GM12878 (cell line): ENCODE measurements at regions of chr12 and their contacts with region 1.

Region 1: DNA sequence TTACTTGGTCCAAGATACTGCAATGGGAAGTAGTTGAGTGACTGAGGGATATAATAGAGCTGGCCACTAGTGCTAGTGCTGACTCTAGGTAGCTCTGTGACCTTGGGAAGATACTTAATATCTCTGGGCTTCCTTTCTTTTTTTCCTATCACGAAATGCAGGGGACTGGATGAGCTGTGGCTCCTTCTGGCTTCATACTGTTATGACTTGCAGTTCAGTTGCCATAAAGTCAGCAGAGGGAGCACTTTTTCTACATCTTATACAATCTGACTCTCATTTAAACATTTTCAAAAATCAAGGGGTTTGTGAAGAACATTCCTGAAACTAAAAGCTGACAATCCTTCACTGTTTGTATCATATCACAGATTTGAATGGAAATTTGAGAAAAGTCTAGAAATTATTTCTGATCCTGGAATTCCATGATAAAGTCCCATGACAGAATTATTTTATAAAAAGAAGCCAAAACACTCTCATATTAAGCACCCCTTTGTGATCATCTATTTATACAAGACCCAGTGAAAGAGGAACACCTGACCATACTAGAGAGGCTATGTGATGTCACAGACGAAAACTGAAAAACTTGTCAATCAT is 5.4 kb downstream of the BHLHE41 start:
- DNase-seq: no peak
- ATAC-seq: peak; percentile 57
- H3K4me3 ChIP-seq: no peak overlapping the region
- H3K27ac ChIP-seq: no peak overlapping the region
- H3K4me1 ChIP-seq: peaks cover 25% of the 10 kb centered on the region
- H3K27me3 ChIP-seq: peaks cover 8 to 28% of the 10 kb centered on the region in 2 experiments
- CTCF ChIP-seq: peak; percentile 40 to 57 (median 46); a peak in 5 of 6 replicates
- EP300 ChIP-seq: no peak
- POLR2A ChIP-seq: no peak
- RAD21 ChIP-seq: peak; percentile 65

Region 2: GRCh38 chr12:26153421-26154154 is 34.1 kb after region 1 on chr12:
- CTCF ChIA-PET with region 1: interaction called, 74 read pairs
- POLR2A ChIA-PET with region 1: interaction called, 11 read pairs
- RAD21 ChIA-PET with region 1: interaction called, 26 read pairs
- SMC1A ChIA-PET with region 1: interaction called, 91 read pairs
- in situ Hi-C with region 1: no loop called
- intact Hi-C with region 1: loop called (anchors 1 kb)
- DNase-seq: no peak
- ATAC-seq: no peak
- H3K4me3 ChIP-seq: no peak overlapping the region
- H3K27ac ChIP-seq: no peak overlapping the region
- H3K4me1 ChIP-seq: peaks cover 35% of the 10 kb centered on the region
- H3K27me3 ChIP-seq: no peaks in the 10 kb centered on the region
- CTCF ChIP-seq: no peak
- EP300 ChIP-seq: no peak
- POLR2A ChIP-seq: no peak
- RAD21 ChIP-seq: no peak

Region 3: GRCh38 chr12:26233631-26234030 is 114.1 kb after region 1 on chr12:
- CTCF ChIA-PET with region 1: no interaction called
- POLR2A ChIA-PET with region 1: no interaction called
- RAD21 ChIA-PET with region 1: no interaction called
- SMC1A ChIA-PET with region 1: no interaction called
- in situ Hi-C with region 1: no loop called
- intact Hi-C with region 1: no loop called
- DNase-seq: no peak
- ATAC-seq: no peak
- H3K4me3 ChIP-seq: no peak overlapping the region
- H3K27ac ChIP-seq: no peak overlapping the region
- H3K4me1 ChIP-seq: no peaks in the 10 kb centered on the region
- H3K27me3 ChIP-seq: peaks cover 0 to 2% of the 10 kb centered on the region in 2 experiments; a peak in 1 of 4 replicates
- CTCF ChIP-seq: no peak
- EP300 ChIP-seq: no peak
- POLR2A ChIP-seq: no peak
- RAD21 ChIP-seq: no peak

Region 4: GRCh38 chr12:26327975-26328644 is 208.6 kb after region 1 on chr12:
- CTCF ChIA-PET with region 1: interaction called, 6 read pairs
- POLR2A ChIA-PET with region 1: no interaction called
- RAD21 ChIA-PET with region 1: interaction called, 4 read pairs
- SMC1A ChIA-PET with region 1: interaction called, 11 read pairs
- in situ Hi-C with region 1: no loop called
- intact Hi-C with region 1: no loop called
- DNase-seq: no peak
- ATAC-seq: peak; percentile 88
- H3K4me3 ChIP-seq: no peak overlapping the region
- H3K27ac ChIP-seq: no peak overlapping the region
- H3K4me1 ChIP-seq: peaks cover 5% of the 10 kb centered on the region
- H3K27me3 ChIP-seq: no peaks in the 10 kb centered on the region
- CTCF ChIP-seq: no peak
- EP300 ChIP-seq: no peak
- POLR2A ChIP-seq: no peak
- RAD21 ChIP-seq: no peak

Region 5: GRCh38 chr12:26406391-26406790 is 286.9 kb after region 1 on chr12:
- CTCF ChIA-PET with region 1: interaction called, 33 read pairs
- POLR2A ChIA-PET with region 1: interaction called, 3 read pairs
- RAD21 ChIA-PET with region 1: interaction called, 3 read pairs
- SMC1A ChIA-PET with region 1: interaction called, 15 read pairs
- in situ Hi-C with region 1: no loop called
- intact Hi-C with region 1: no loop called
- DNase-seq: no peak
- ATAC-seq: no peak
- H3K4me3 ChIP-seq: no peak overlapping the region
- H3K27ac ChIP-seq: no peak overlapping the region
- H3K4me1 ChIP-seq: no peaks in the 10 kb centered on the region
- H3K27me3 ChIP-seq: no peaks in the 10 kb centered on the region
- CTCF ChIP-seq: no peak
- EP300 ChIP-seq: no peak
- POLR2A ChIP-seq: no peak
- RAD21 ChIP-seq: no peak

Region 6: GRCh38 chr12:26465419-26466097 is 346.1 kb after region 1 on chr12:
- CTCF ChIA-PET with region 1: interaction called, 11 read pairs
- POLR2A ChIA-PET with region 1: no interaction called
- RAD21 ChIA-PET with region 1: interaction called, 7 read pairs
- SMC1A ChIA-PET with region 1: interaction called, 4 read pairs
- in situ Hi-C with region 1: no loop called
- intact Hi-C with region 1: loop called (anchors 2 kb)
- DNase-seq: no peak
- ATAC-seq: no peak
- H3K4me3 ChIP-seq: no peak overlapping the region
- H3K27ac ChIP-seq: no peak overlapping the region
- H3K4me1 ChIP-seq: peaks cover 6% of the 10 kb centered on the region
- H3K27me3 ChIP-seq: no peaks in the 10 kb centered on the region
- CTCF ChIP-seq: 0 out of 6 replicates have a peak, but pooled peaks of 1 of the 3 experiments have one; percentile 5
- EP300 ChIP-seq: no peak
- POLR2A ChIP-seq: no peak
- RAD21 ChIP-seq: no peak

Region 7: GRCh38 chr12:26614020-26614616 is 494.6 kb after region 1 on chr12:
- CTCF ChIA-PET with region 1: interaction called, 22 read pairs
- POLR2A ChIA-PET with region 1: no interaction called
- RAD21 ChIA-PET with region 1: interaction called, 8 read pairs
- SMC1A ChIA-PET with region 1: interaction called, 11 read pairs
- in situ Hi-C with region 1: no loop called
- intact Hi-C with region 1: no loop called
- DNase-seq: no peak
- ATAC-seq: peak; percentile 57
- H3K4me3 ChIP-seq: no peak overlapping the region
- H3K27ac ChIP-seq: no peak overlapping the region
- H3K4me1 ChIP-seq: no peaks in the 10 kb centered on the region
- H3K27me3 ChIP-seq: no peaks in the 10 kb centered on the region
- CTCF ChIP-seq: peak; percentile 42 to 52 (median 52)
- EP300 ChIP-seq: no peak
- POLR2A ChIP-seq: no peak
- RAD21 ChIP-seq: peak; percentile 46